ENCODE measurements at regions of chr11 and their contacts with region 1.

Region 1: GRCh38 chr11:120295084-120295483 is 30.0 kb upstream of the TLCD5 start:
- DNase-seq: peak in 4 of 6 donors; percentile 47 to 59 (median 54)
- ATAC-seq: peak; percentile 45 to 80 (median 68)
- H3K4me3 ChIP-seq: no peak overlapping the region
- H3K27ac ChIP-seq: peak overlapping the region in 2 of 4 donors; percentile 11 to 17
- H3K4me1 ChIP-seq: peaks cover 0 to 3% (median 0%) of the 10 kb centered on the region in 3 donors
- H3K27me3 ChIP-seq: no peaks in the 10 kb centered on the region
- CTCF ChIP-seq: no peak

Region 2: DNA sequence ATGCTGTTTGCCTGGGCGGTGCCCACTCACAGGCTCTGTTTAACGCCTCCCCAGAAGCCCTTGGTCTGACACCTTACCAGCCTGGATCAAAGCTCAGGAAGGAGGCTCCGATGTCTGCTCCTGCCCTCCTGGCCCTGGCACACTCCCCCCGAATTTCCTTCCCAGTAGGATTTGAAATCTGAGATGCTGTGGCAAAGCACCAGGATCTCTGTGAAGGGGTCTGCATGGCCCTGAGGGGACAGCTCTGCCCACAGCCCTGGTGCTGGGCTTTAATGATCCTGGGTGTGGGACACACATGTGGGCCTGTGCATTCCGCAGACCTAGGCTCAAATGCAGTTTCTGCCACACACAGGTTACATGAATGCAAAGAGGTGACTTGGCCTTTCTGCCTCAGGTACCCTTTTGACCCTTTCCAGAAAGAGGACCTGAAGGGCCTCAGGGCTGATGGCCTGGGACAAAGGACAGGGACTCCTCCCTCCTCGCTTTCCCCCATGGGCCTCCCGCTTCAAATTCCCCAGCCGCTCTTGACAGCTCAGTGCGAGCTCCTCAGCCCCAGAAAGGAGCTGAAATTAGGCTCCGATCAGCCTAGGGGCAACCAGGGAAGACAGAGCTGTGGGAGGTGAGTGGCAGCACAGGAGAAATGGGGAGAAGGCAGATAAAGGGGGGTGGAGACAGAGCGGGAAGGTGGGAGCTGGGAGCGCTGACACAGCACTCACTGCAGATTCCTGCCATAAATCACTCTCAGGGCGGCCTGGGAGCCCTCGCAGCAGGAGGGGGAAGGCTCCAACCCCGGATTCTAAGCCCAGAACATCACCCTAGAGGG is 198.5 kb before region 1 on chr11:
- intact Hi-C with region 1: no loop called
- DNase-seq: no peak
- ATAC-seq: no peak
- H3K4me3 ChIP-seq: no peak overlapping the region
- H3K27ac ChIP-seq: no peak overlapping the region
- H3K4me1 ChIP-seq: peaks cover 0 to 1% (median 0%) of the 10 kb centered on the region in 3 donors
- H3K27me3 ChIP-seq: no peaks in the 10 kb centered on the region
- CTCF ChIP-seq: no peak

Region 3: DNA sequence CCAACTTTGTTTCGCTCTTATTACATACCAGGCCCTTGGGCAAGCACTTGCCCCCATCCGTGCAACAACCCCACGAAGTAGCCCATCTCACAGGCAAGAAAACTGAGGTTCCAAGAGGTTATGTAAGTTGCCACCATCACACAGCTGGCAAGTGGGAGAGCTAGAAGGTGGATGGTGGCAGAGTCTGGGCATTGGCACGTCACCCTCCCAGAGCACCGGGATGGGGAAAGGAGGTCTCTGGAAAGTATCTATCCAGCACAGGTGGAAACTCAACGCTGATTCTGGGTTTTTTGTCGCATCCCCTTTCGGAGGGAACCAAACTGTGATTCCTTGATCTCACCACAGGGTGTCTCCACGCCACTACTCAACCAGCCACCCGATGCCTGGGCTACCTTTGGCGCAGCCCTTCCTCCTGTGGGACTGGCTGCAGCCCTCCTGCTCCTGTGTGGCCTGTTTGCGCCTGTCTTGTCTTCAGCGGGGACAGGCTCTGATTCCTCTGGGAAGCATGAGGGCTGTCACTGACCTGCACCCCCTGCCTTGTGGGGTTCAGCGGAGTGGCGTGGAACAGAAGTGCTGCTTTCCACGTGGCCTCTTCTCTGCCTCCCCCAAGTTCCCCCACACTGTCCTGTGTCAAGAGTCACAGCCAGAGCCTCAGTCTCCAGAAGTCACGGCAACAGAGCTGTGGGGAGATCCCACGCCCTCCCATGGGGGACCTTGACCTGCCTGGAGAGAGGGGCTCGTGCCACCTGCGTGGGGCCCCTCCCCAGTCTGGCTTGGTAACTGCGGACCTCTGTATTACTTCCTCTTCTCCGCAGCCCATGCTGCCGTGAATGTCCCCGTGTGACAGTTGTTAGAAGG is 122.8 kb before region 1 on chr11:
- intact Hi-C with region 1: loop called in 1 of 3 experiments (anchors 5 kb)
- DNase-seq: peak in 5 of 6 donors; percentile 63 to 88 (median 75)
- ATAC-seq: peak; percentile 57 to 78 (median 76)
- H3K4me3 ChIP-seq: no peak overlapping the region
- H3K27ac ChIP-seq: no peak overlapping the region
- H3K4me1 ChIP-seq: peaks cover 0 to 3% (median 0%) of the 10 kb centered on the region in 3 donors
- H3K27me3 ChIP-seq: no peaks in the 10 kb centered on the region
- CTCF ChIP-seq: peak; percentile 71 to 83 (median 74)

Region 4: DNA sequence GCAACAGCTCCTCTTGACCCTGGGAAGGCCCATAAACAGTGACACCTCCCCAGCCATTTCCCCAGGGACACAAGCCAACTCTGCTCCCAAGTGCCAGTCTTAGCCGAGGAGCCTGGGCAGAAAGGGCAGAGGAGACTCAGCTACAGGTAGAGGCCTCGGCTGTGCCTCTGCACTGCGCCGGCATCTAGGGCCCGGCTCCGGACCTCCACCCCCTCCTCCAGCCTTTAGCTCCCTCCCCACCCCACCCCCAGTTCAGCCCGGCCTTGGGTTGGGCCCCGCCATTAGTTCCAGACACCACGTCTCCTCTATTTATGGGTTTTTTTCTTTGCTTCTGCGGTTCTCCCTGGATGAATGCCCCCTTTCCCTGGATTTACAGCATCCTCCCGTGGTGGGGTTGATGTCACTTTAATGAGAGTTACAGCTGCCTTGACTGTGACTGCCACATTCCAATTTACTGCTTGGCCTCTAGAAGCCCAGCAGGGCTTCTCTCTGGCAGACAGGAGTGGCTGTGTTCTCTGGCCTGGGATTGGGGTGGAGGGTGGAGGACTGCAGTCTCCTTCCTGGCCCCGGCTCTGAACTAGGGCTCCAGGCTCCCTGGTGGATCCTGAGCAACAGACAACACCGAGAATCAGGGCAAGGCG is 97.7 kb before region 1 on chr11:
- intact Hi-C with region 1: loop called in 1 of 3 experiments (anchors 10 kb)
- DNase-seq: no peak
- ATAC-seq: no peak
- H3K4me3 ChIP-seq: no peak overlapping the region
- H3K27ac ChIP-seq: no peak overlapping the region
- H3K4me1 ChIP-seq: peaks cover 8 to 11% (median 10%) of the 10 kb centered on the region in 3 donors
- H3K27me3 ChIP-seq: no peaks in the 10 kb centered on the region
- CTCF ChIP-seq: no peak

Region 5: GRCh38 chr11:120235024-120235861 is 59.8 kb before region 1 on chr11:
- intact Hi-C with region 1: loop called in 2 of 3 experiments (anchors 5 kb)
- DNase-seq: peak; percentile 66 to 90 (median 82)
- ATAC-seq: peak; percentile 80 to 91 (median 86)
- H3K4me3 ChIP-seq: no peak overlapping the region
- H3K27ac ChIP-seq: no peak overlapping the region
- H3K4me1 ChIP-seq: peaks cover 0 to 2% (median 0%) of the 10 kb centered on the region in 3 donors
- H3K27me3 ChIP-seq: no peaks in the 10 kb centered on the region
- CTCF ChIP-seq: peak; percentile 68 to 85 (median 72)

Region 6: GRCh38 chr11:120462825-120463224 is 167.7 kb after region 1 on chr11:
- intact Hi-C with region 1: no loop called
- DNase-seq: no peak
- ATAC-seq: peak in 2 of 4 donors; percentile 66 to 77
- H3K4me3 ChIP-seq: no peak overlapping the region
- H3K27ac ChIP-seq: no peak overlapping the region
- H3K4me1 ChIP-seq: no peaks in the 10 kb centered on the region
- H3K27me3 ChIP-seq: no peaks in the 10 kb centered on the region
- CTCF ChIP-seq: no peak